H1 (cell line): ENCODE measurements at regions of chr1 and their contacts with region 1.

Region 1: GRCh38 chr1:59903141-59903754 is 23.3 kb downstream of the CYP2J2 start:
- DNase-seq: peak in 1 of 2 experiments; percentile 52
- H3K4me3 ChIP-seq: no peak overlapping the region
- H3K27ac ChIP-seq: no peak overlapping the region
- H3K4me1 ChIP-seq: no peaks in the 10 kb centered on the region
- H3K27me3 ChIP-seq: no peaks in the 10 kb centered on the region
- CTCF ChIP-seq: peak; percentile 32 to 80 (median 58)
- EP300 ChIP-seq: no peak
- POLR2A ChIP-seq: no peak
- RAD21 ChIP-seq: peak; percentile 66

Region 2: DNA sequence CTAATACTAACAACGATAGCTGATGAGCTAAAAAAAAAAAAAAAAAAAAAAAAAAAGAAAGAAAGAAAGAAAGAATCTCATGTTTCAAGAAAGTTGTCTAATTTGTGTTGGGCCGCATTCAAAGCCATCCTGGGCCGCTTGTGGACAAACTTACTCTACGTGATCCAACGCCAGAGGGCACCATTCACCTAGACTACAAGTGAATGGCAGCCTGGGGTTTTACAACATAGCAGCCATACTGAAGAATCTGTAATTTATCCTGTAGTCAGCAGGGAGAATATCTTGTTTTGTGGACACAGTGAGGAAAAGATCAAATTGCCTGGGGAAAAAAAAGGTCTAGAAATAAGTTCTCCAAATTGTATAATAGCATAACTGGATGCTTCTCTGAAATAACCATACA is 23.7 kb before region 1 on chr1:
- CTCF ChIA-PET with region 1: interaction called, 63 read pairs
- POLR2A ChIA-PET with region 1: no interaction called
- DNase-seq: peak in 1 of 2 experiments; percentile 75
- H3K4me3 ChIP-seq: no peak overlapping the region
- H3K27ac ChIP-seq: no peak overlapping the region
- H3K4me1 ChIP-seq: no peaks in the 10 kb centered on the region
- H3K27me3 ChIP-seq: no peaks in the 10 kb centered on the region
- CTCF ChIP-seq: peak; percentile 45 to 73 (median 71)
- EP300 ChIP-seq: no peak
- POLR2A ChIP-seq: no peak
- RAD21 ChIP-seq: peak; percentile 81 to 82

Region 3: DNA sequence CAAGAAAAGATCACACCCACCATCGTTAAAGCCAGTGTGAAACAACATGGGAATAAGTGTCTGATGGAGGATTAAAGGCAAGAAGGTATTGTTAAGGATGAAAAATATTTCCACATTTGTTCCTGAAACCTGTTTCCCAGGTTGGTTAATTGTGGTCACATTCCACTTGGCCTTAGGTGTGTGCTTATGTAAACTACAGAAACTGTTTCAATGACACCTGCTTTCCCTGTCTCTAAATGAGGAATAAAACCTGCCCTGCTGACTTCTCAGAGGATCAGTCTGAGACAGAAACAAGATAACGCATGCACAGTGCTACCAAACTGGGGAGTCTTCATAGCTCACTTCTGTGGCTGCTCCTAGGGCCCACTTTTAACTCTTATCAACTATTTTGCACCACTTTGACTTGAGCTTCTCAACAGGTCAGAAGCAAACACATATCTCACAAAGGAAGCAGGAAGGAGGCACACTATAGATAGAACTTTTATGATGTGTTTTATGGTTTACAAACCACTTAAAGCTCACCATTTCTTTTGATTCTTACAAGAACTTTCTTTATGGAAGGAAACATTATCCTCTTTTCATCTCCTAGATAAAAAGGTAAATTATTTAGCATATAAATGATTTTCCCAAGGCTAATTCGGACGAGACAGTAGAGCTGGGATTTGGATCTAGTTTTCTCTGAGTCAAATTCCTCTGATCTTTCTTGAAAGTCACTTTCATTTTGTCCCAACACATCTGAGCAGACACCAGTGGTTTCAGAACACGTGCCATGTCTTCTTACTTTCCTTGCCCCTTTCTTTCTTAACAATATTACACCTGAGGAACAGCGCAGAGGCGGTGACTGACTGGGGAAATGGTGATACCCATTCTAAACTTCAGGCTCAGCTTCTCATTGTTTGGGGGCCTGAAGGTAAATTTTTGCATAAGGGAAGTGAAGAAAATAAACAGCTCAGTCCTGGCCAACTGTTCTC is 10.1 kb before region 1 on chr1:
- CTCF ChIA-PET with region 1: interaction called, 36 read pairs
- POLR2A ChIA-PET with region 1: no interaction called
- DNase-seq: no peak
- H3K4me3 ChIP-seq: no peak overlapping the region
- H3K27ac ChIP-seq: no peak overlapping the region
- H3K4me1 ChIP-seq: no peaks in the 10 kb centered on the region
- H3K27me3 ChIP-seq: no peaks in the 10 kb centered on the region
- CTCF ChIP-seq: no peak
- EP300 ChIP-seq: no peak
- POLR2A ChIP-seq: no peak
- RAD21 ChIP-seq: no peak

Region 4: DNA sequence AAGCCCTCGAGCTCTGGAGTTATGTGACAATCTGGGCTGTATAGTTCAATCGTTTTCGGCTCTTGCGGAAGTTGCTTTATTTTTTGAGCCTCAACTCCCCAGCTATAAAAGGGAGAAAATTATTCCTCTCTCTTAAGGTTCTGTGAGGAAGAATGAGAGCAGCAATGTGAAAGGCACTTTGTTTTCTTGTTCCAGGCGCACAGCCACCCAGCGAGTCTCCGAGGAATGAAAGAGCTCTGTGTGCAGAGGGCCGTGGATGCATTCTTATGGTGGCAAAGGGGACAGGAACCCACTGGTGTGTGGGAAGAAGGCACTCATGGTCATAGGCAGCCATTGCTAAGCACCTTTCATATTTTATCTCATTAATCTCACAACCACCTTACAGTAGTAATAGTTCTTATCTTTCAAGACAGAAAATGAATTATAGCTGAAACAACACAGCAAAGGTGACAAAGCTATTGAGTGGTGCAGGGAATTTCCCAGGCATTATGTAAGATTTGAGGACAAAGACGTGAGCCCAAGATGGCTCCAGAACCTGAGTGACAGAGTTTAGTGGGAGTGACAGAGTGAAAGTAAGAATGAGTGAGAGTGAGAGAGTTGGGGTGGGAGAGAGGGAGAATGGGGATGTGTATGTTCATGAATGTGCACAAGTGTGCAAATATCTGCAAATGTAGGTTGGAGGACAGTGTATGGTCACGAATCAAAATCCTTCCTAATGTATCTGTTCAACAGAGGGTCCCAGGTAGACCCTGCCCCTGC is 14.0 kb after region 1 on chr1:
- CTCF ChIA-PET with region 1: interaction called, 20 read pairs
- POLR2A ChIA-PET with region 1: no interaction called
- DNase-seq: no peak
- H3K4me3 ChIP-seq: no peak overlapping the region
- H3K27ac ChIP-seq: no peak overlapping the region
- H3K4me1 ChIP-seq: no peaks in the 10 kb centered on the region
- H3K27me3 ChIP-seq: no peaks in the 10 kb centered on the region
- CTCF ChIP-seq: no peak
- EP300 ChIP-seq: no peak
- POLR2A ChIP-seq: no peak
- RAD21 ChIP-seq: no peak

Region 5: GRCh38 chr1:59926381-59927123 is 23.3 kb after region 1 on chr1 and contains the start of gene CYP2J2:
- CTCF ChIA-PET with region 1: interaction called, 11 read pairs
- POLR2A ChIA-PET with region 1: no interaction called
- DNase-seq: peak in 1 of 2 experiments; percentile 76
- H3K4me3 ChIP-seq: peak within 1 kb of the TSS; percentile 29 to 72 (median 56)
- H3K27ac ChIP-seq: no peak within 1 kb of the TSS
- H3K4me1 ChIP-seq: no peaks in the 10 kb centered on the region
- H3K27me3 ChIP-seq: peaks cover 2 to 19% (median 12%) of the 10 kb centered on the region in 4 experiments
- CTCF ChIP-seq: no peak
- EP300 ChIP-seq: no peak
- POLR2A ChIP-seq: no peak
- RAD21 ChIP-seq: no peak
- total RNA-seq, gene CYP2J2: 2.1 and 2.2 TPM in 2 replicates

Region 6: GRCh38 chr1:59939393-59939792 is 36.1 kb after region 1 on chr1:
- CTCF ChIA-PET with region 1: interaction called, 40 read pairs
- POLR2A ChIA-PET with region 1: no interaction called
- DNase-seq: no peak
- H3K4me3 ChIP-seq: no peak overlapping the region
- H3K27ac ChIP-seq: no peak overlapping the region
- H3K4me1 ChIP-seq: no peaks in the 10 kb centered on the region
- H3K27me3 ChIP-seq: no peaks in the 10 kb centered on the region
- CTCF ChIP-seq: no peak
- EP300 ChIP-seq: no peak
- POLR2A ChIP-seq: no peak
- RAD21 ChIP-seq: no peak

Region 7: GRCh38 chr1:59947047-59947938 is 44.0 kb after region 1 on chr1:
- CTCF ChIA-PET with region 1: interaction called, 44 read pairs
- POLR2A ChIA-PET with region 1: no interaction called
- DNase-seq: peak in 1 of 2 experiments; percentile 59
- H3K4me3 ChIP-seq: no peak overlapping the region
- H3K27ac ChIP-seq: no peak overlapping the region
- H3K4me1 ChIP-seq: no peaks in the 10 kb centered on the region
- H3K27me3 ChIP-seq: no peaks in the 10 kb centered on the region
- CTCF ChIP-seq: peak; percentile 78 to 93 (median 85)
- EP300 ChIP-seq: no peak
- POLR2A ChIP-seq: no peak
- RAD21 ChIP-seq: peak; percentile 94 to 96